Activated T-helper 1 cell treated with anti-CD3 and anti-CD28 coated beads, Interleukin-12 subunit alpha, Interleukin-12 subunit beta, Interleukin-2, Interleukin-4 antibody, amounts not matched to agents 30 ng/mL and 10 ng/mL and 1 ng/mL, durations not matched to agents 14 hours and 24 hours and 36 hours (primary cell): ENCODE measurements at regions of chr1 and their contacts with region 1.

Region 1: GRCh38 chr1:200620273-200621131 is at the start of gene KIF14:
- DNase-seq: peak; percentile 93
- H3K4me3 Mint-ChIP-seq: peak within 1 kb of the TSS; percentile 95
- H3K27ac Mint-ChIP-seq: peak within 1 kb of the TSS; percentile 95
- H3K4me1 Mint-ChIP-seq: peaks cover 60% of the 10 kb centered on the region
- H3K27me3 Mint-ChIP-seq: no peaks in the 10 kb centered on the region
- total RNA-seq, gene KIF14: 11.5 and 12.5 TPM in 2 replicates

Region 2: GRCh38 chr1:198620951-198621824 is 1999.3 kb before region 1 on chr1:
- intact Hi-C with region 1: loop called (anchors 10 kb)
- DNase-seq: peak; percentile 66
- H3K4me3 Mint-ChIP-seq: peak overlapping the region; percentile 84
- H3K27ac Mint-ChIP-seq: peak overlapping the region; percentile 99
- H3K4me1 Mint-ChIP-seq: peaks cover 82% of the 10 kb centered on the region
- H3K27me3 Mint-ChIP-seq: no peaks in the 10 kb centered on the region

Region 3: DNA sequence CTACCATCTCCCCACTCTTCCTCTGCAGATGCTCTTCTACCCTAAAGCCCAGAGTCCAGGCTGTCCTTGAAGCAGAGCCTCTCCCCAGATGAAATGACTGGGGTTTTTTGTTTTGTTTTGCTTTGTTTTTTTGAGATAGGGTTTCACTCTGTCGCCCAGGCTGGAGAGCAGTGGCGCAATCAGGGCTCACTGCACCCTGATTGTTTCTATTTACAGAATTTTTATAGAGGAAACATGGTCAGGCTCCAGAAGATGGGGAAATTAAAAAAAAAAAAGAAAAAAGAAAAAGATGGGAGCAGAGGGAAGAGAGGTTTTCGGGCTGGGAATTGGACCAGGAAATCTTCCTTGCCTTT is 167.0 kb before region 1 on chr1:
- intact Hi-C with region 1: no loop called
- DNase-seq: no peak
- H3K4me3 Mint-ChIP-seq: no peak overlapping the region
- H3K27ac Mint-ChIP-seq: no peak overlapping the region
- H3K4me1 Mint-ChIP-seq: peaks cover 17% of the 10 kb centered on the region
- H3K27me3 Mint-ChIP-seq: no peaks in the 10 kb centered on the region

Region 4: GRCh38 chr1:200558866-200559459 is 61.5 kb before region 1 on chr1:
- intact Hi-C with region 1: loop called (anchors 2 kb)
- DNase-seq: no peak
- H3K4me3 Mint-ChIP-seq: no peak overlapping the region
- H3K27ac Mint-ChIP-seq: no peak overlapping the region
- H3K4me1 Mint-ChIP-seq: peaks cover 16% of the 10 kb centered on the region
- H3K27me3 Mint-ChIP-seq: no peaks in the 10 kb centered on the region

Region 5: DNA sequence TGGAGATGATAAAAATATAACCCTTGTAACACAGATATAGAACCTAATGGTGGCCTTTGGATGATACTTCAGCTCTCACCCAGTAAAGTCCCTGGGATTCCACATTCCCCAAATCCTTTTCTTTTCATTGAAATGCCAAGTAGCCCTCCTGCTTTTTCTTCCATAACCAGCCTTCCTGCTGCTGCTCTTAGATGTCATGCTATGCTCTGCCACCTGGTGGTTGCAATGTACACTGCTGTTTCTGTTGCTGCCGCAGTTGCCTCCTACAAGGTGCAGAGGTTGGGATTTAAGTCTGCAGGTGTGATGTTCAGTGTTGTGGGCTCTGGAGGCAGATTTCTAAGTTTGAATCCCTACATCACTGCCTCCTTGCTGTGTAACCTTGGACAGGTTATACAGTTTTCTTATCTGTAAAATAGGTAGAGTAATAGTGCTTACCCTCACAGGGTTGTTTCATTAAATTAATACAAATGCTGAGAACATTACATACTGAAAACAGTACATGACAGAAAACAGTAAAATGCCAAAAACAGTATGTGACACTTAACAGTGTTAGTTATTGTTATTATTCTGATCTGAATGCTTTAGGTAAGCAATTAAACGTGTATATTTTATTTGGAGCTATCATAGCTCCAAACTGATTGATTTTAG is 182.5 kb after region 1 on chr1:
- intact Hi-C with region 1: loop called (anchors 1 kb)
- DNase-seq: peak; percentile 49
- H3K4me3 Mint-ChIP-seq: no peak overlapping the region
- H3K27ac Mint-ChIP-seq: no peak overlapping the region
- H3K4me1 Mint-ChIP-seq: no peaks in the 10 kb centered on the region
- H3K27me3 Mint-ChIP-seq: peaks cover 14% of the 10 kb centered on the region

Region 6: GRCh38 chr1:201023517-201023902 is 403.0 kb after region 1 on chr1 and contains the start of gene KIF21B:
- intact Hi-C with region 1: loop called (anchors 2 kb)
- DNase-seq: peak; percentile 92
- H3K4me3 Mint-ChIP-seq: peak within 1 kb of the TSS; percentile 100
- H3K27ac Mint-ChIP-seq: peak within 1 kb of the TSS; percentile 99
- H3K4me1 Mint-ChIP-seq: peaks cover 79% of the 10 kb centered on the region
- H3K27me3 Mint-ChIP-seq: no peaks in the 10 kb centered on the region
- total RNA-seq, gene KIF21B: 50.4 and 52.0 TPM in 2 replicates

Region 7: GRCh38 chr1:201114236-201115131 is 494.0 kb after region 1 on chr1:
- intact Hi-C with region 1: loop called (anchors 5 kb)
- DNase-seq: peak; percentile 57
- H3K4me3 Mint-ChIP-seq: peak overlapping the region; percentile 85
- H3K27ac Mint-ChIP-seq: peak overlapping the region; percentile 48
- H3K4me1 Mint-ChIP-seq: no peaks in the 10 kb centered on the region
- H3K27me3 Mint-ChIP-seq: peaks cover 35% of the 10 kb centered on the region

Region 8: DNA sequence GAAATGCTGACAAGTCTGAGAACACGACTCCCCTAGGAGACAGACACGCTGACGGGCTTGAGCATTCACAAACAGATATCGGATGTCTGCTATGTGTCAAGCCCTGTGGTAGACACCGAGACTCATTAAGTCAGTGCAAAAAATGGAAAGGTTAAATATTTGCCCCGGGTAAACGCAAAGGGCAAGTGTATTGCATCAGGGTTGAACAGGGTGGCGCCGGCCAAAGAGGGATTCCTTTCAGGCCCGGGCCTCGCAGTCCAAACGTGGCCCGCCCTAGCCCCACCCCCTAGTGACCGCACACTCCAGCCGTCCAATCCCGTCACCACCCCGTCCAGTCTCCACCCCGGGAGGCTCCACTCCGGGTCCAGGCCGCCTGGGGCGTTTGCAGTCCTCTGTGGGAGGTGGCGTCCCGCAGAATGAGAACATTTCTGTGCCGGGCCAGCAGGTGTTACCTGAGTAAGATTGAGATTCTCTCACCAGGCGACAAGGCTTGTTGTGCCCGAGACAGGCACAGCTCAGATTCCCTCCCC is 550.1 kb after region 1 on chr1:
- intact Hi-C with region 1: loop called (anchors 2 kb)
- DNase-seq: peak; percentile 65
- H3K4me3 Mint-ChIP-seq: peak overlapping the region; percentile 76
- H3K27ac Mint-ChIP-seq: peak overlapping the region; percentile 65
- H3K4me1 Mint-ChIP-seq: peaks cover 6% of the 10 kb centered on the region
- H3K27me3 Mint-ChIP-seq: peaks cover 21% of the 10 kb centered on the region